ENCODE measurements at regions of chr16 and their contacts with region 1.

Region 1: GRCh38 chr16:26583803-26584202 is 482.9 kb upstream of the C16orf82 start:
- DNase-seq: no peak
- ATAC-seq: no peak
- H3K4me3 Mint-ChIP-seq: no peak overlapping the region
- H3K27ac Mint-ChIP-seq: no peak overlapping the region
- H3K4me1 Mint-ChIP-seq: no peaks in the 10 kb centered on the region
- H3K27me3 Mint-ChIP-seq: peaks cover 38% of the 10 kb centered on the region

Region 2: DNA sequence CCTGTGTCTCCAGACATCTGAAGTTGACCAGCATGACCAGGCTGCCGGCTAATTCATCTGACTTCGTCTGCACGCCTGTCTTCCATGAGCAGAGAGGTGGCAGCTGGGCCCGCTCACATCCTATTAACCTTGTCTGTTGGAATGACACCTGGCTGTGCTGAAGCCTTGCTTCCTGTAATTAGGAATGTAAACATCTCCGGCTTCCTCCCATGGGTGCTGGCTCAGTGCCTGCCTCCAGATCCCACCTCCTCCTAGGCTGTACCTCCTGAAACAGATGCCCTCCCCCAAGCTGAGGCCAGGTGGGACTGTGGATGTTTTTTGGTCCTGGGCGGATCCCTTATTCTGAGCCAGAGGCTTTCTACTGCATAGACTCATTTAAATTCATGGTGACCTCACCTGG is 595.7 kb before region 1 on chr16:
- CTCF ChIA-PET with region 1: no interaction called
- POLR2A ChIA-PET with region 1: no interaction called
- intact Hi-C with region 1: no loop called
- DNase-seq: no peak
- ATAC-seq: no peak
- H3K4me3 Mint-ChIP-seq: no peak overlapping the region
- H3K27ac Mint-ChIP-seq: no peak overlapping the region
- H3K4me1 Mint-ChIP-seq: no peaks in the 10 kb centered on the region
- H3K27me3 Mint-ChIP-seq: peaks cover 7% of the 10 kb centered on the region

Region 3: DNA sequence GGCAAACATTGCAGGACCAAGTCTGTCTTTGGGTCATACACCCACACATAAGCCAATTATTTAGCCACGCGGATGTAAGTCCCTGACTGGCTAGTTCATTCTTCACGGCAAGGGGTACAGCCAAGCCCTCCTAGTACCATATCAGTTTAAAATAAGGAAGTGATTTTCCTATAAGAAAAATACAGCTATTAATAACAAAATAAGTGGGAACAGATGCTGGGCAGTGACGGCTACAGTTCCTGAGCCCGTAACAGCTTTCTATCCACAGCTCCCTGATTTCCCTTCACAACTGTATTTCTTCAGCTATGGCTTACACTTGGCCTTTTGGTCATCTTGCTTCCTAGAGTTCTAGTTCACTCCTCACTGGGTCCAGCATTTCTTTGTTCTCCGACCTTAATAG is 59.5 kb before region 1 on chr16:
- CTCF ChIA-PET with region 1: no interaction called
- POLR2A ChIA-PET with region 1: no interaction called
- intact Hi-C with region 1: loop called in 1 of 2 experiments (anchors 10 kb)
- DNase-seq: no peak
- ATAC-seq: no peak
- H3K4me3 Mint-ChIP-seq: no peak overlapping the region
- H3K27ac Mint-ChIP-seq: no peak overlapping the region
- H3K4me1 Mint-ChIP-seq: no peaks in the 10 kb centered on the region
- H3K27me3 Mint-ChIP-seq: peaks cover 10% of the 10 kb centered on the region

Region 4: GRCh38 chr16:26542198-26542769 is 41.5 kb before region 1 on chr16:
- CTCF ChIA-PET with region 1: no interaction called
- POLR2A ChIA-PET with region 1: no interaction called
- intact Hi-C with region 1: no loop called
- DNase-seq: no peak
- ATAC-seq: no peak
- H3K4me3 Mint-ChIP-seq: no peak overlapping the region
- H3K27ac Mint-ChIP-seq: no peak overlapping the region
- H3K4me1 Mint-ChIP-seq: no peaks in the 10 kb centered on the region
- H3K27me3 Mint-ChIP-seq: peaks cover 8% of the 10 kb centered on the region

Measured in activated CD4-positive, alpha-beta T cell treated with anti-CD3 and anti-CD28 coated beads for 36 hours (primary cell).